GM10248 (cell line): ENCODE measurements at regions of chr2 and their contacts with region 1.

Region 1: DNA sequence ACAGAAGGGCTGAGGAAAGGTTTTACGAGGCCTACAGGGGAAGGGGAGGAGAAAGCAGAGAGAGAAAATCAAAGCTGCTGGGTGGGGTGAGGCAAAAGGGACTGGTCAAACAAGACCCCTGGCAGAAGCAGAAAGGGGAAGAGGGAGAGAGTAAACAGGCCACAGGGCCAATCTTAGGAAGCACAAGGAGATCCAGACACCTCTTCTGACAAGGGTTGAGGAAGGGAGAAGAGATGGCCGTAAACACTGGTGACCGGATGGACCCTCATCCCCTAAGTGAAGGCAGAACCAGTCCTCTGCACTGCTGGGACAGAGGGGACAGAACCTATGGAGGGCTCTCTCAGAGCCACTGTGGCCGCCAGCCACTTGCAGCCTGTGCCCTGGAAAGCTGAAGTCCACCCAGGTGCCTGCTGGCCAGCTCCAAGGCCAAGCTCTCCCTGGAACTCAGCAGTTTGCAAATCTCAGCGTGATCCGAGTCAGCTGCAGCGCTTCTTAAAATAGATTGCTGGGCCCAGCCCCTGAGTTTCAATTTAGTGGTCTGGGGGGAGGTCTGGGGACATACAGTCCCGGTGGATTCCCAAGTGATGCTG is 108.8 kb downstream of the TMEM163 start:
- DNase-seq: no peak
- CTCF ChIP-seq: no peak

Region 2: GRCh38 chr2:134621939-134622705 is 12.1 kb after region 1 on chr2:
- CTCF ChIA-PET with region 1: interaction called, 15 read pairs
- POLR2A ChIA-PET with region 1: no interaction called
- DNase-seq: no peak
- CTCF ChIP-seq: no peak